ENCODE measurements at regions of chr6 and their contacts with region 1.

Region 1: GRCh38 chr6:36027501-36028087 is at the start of gene MAPK14:
- DNase-seq: peak in 1 of 2 donors; percentile 99
- H3K4me3 ChIP-seq: peak within 1 kb of the TSS; percentile 87 to 95
- H3K27ac ChIP-seq: peak within 1 kb of the TSS; percentile 97
- H3K4me1 ChIP-seq: peaks cover 37% of the 10 kb centered on the region
- H3K27me3 ChIP-seq: no peaks in the 10 kb centered on the region
- CTCF ChIP-seq: peak; percentile 81 to 98 (median 96)
- POLR2A ChIP-seq: peak; percentile 41 to 94
- total RNA-seq, gene MAPK14: 71.9 TPM

Region 2: GRCh38 chr6:35590622-35591066 is 436.9 kb before region 1 on chr6:
- intact Hi-C with region 1: no loop called
- DNase-seq: peak in 1 of 2 donors; percentile 95
- H3K4me3 ChIP-seq: no peak overlapping the region
- H3K27ac ChIP-seq: peak overlapping the region; percentile 88
- H3K4me1 ChIP-seq: peaks cover 100% of the 10 kb centered on the region
- H3K27me3 ChIP-seq: no peaks in the 10 kb centered on the region
- CTCF ChIP-seq: no peak
- POLR2A ChIP-seq: no peak

Region 3: DNA sequence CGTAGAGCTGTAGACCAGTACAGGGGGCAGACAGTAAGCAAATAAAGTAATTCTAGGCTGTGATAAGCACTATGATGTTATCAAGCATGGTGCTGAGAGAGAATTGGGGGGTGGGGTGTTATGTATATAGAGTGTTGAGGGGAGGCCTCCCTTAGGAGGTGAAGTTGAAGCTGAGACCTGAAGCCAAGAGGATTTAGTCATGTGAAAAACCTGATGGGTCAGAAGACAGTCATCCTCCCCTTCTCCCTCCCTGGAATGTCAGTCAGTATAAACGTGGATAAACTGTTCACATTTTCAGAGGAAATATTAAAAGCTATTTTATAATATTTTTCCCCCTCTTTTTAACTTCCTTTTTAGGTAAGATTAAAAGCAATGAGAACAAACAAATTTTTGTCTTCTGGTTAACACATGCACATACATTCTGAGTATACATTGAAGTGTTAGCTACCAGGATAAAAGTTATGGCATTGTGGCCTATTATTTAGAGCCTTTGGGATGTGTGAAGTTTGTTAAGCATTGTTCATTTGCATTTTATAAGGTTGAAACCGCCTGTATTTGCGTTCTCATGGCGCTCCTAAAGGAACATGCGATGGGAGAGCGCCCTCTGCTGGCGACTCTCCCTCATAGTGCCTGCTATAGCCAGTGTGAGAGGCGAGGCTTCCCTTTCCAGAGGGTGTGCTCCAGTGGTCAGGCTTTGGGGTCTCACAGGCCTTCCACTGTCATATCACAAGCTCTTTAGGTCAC is 67.3 kb after region 1 on chr6:
- intact Hi-C with region 1: loop called (anchors 1 kb)
- DNase-seq: no peak
- H3K4me3 ChIP-seq: no peak overlapping the region
- H3K27ac ChIP-seq: peak overlapping the region; percentile 76
- H3K4me1 ChIP-seq: peaks cover 11% of the 10 kb centered on the region
- H3K27me3 ChIP-seq: no peaks in the 10 kb centered on the region
- CTCF ChIP-seq: peak; percentile 87 to 93 (median 92)
- POLR2A ChIP-seq: no peak